ENCODE measurements at regions of chr9 and their contacts with region 1.

Region 1: DNA sequence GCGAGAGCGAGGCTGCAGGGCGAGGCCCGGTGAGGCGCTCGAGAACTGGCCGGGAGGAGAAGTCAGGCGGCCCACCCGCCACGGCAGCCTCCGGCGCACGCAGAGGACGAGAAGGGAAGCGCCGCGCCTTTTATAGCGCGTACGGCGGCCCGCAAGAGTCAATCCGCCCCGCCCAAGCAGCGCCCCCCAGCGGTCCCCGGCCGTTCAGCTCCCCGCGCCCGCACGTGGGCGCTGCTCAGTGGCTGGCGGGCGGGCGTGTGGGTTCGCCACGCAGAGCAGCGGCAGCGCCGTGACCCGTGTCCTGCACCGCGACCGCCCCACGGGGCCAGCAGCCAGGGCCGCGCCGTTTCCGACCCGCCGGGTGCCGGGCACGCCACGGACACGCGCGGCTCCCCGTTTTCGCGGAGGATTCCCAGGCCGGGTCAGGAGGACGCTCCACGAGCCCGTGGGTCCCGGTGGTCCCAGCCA is 14.6 kb downstream of the LCN10 start:
- DNase-seq: peak; percentile 87 to 97 (median 92)
- ATAC-seq: peak; percentile 96
- H3K4me3 ChIP-seq: peak overlapping the region; percentile 87
- H3K4me3 Mint-ChIP-seq: peak overlapping the region in 9 of 10 donors; percentile 47 to 99 (median 95)
- H3K27ac ChIP-seq: peak overlapping the region; percentile 83
- H3K27ac Mint-ChIP-seq: peak overlapping the region in 7 of 9 donors; percentile 47 to 93 (median 92)
- H3K4me1 ChIP-seq: peaks cover 16 to 17% of the 10 kb centered on the region in 2 donors
- H3K4me1 Mint-ChIP-seq: peaks cover 12 to 37% (median 28%) of the 10 kb centered on the region in 7 donors
- H3K27me3 ChIP-seq: no peaks in the 10 kb centered on the region
- H3K27me3 Mint-ChIP-seq: peaks cover 0 to 5% (median 0%) of the 10 kb centered on the region in 5 donors

Region 2: GRCh38 chr9:136539427-136540421 is 188.4 kb before region 1 on chr9:
- CTCF ChIA-PET with region 1: no interaction called
- POLR2A ChIA-PET with region 1: interaction called, 15 read pairs
- intact Hi-C with region 1: no loop called
- DNase-seq: peak; percentile 50 to 92 (median 80)
- ATAC-seq: peak; percentile 79
- H3K4me3 ChIP-seq: peak overlapping the region; percentile 65
- H3K4me3 Mint-ChIP-seq: peak overlapping the region; percentile 78 to 97 (median 85)
- H3K27ac ChIP-seq: peak overlapping the region; percentile 80
- H3K27ac Mint-ChIP-seq: peak overlapping the region; percentile 90 to 99 (median 99)
- H3K4me1 ChIP-seq: peaks cover 61 to 70% of the 10 kb centered on the region in 2 donors
- H3K4me1 Mint-ChIP-seq: peaks cover 24 to 73% (median 48%) of the 10 kb centered on the region in 7 donors
- H3K27me3 ChIP-seq: no peaks in the 10 kb centered on the region
- H3K27me3 Mint-ChIP-seq: no peaks in the 10 kb centered on the region

Region 3: GRCh38 chr9:136671646-136672430 is 56.3 kb before region 1 on chr9:
- CTCF ChIA-PET with region 1: interaction called, 3 read pairs
- POLR2A ChIA-PET with region 1: interaction called, 7 read pairs
- intact Hi-C with region 1: loop called in 1 of 2 experiments (anchors 1 kb)
- DNase-seq: peak in 4 of 9 donors; percentile 31 to 57 (median 42)
- ATAC-seq: peak; percentile 55
- H3K4me3 ChIP-seq: no peak overlapping the region
- H3K4me3 Mint-ChIP-seq: no peak overlapping the region
- H3K27ac ChIP-seq: no peak overlapping the region
- H3K27ac Mint-ChIP-seq: no peak overlapping the region
- H3K4me1 ChIP-seq: no peaks in the 10 kb centered on the region
- H3K4me1 Mint-ChIP-seq: no peaks in the 10 kb centered on the region
- H3K27me3 ChIP-seq: no peaks in the 10 kb centered on the region
- H3K27me3 Mint-ChIP-seq: peaks cover 0 to 4% (median 0%) of the 10 kb centered on the region in 5 donors

Region 4: DNA sequence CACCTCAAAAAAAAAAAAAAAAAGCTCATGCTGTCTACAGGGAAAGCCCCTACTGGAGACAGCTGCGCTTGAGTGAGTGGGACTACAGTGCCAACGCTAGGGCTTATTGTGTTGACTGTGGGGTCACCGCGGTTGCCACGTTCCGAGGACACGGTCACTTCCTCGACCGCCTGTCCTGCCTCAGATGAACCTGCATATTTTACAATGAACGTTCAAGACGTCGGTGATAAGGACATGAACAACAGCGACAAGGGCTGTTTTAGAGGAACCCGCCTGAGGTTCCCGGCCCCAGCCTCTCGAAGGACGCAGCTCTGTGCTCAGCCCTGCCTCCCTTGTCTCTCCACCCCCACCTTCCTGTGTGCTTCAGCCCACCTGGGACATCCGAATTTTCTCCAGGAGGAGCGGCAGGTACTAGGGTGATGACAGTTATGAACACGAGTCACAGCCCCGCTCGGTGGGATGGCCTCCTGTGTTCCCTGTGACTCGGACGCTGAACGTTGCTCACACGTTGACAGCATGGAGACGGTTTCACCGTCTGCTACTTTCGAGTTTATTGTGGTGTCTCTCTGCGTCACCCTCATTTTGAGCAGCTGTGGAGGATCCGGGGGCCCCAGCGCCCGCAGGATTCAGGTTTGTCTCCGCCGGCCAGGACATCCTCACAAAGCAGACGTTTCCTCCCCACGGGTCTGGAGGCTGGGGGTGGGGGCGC is 27.0 kb before region 1 on chr9:
- CTCF ChIA-PET with region 1: no interaction called
- POLR2A ChIA-PET with region 1: interaction called, 19 read pairs
- intact Hi-C with region 1: loop called (anchors 1 to 2 kb)
- DNase-seq: peak; percentile 35 to 68 (median 55)
- ATAC-seq: peak; percentile 83
- H3K4me3 ChIP-seq: peak overlapping the region; percentile 65
- H3K4me3 Mint-ChIP-seq: peak overlapping the region; percentile 76 to 91 (median 84)
- H3K27ac ChIP-seq: peak overlapping the region; percentile 30
- H3K27ac Mint-ChIP-seq: peak overlapping the region; percentile 25 to 93 (median 83)
- H3K4me1 ChIP-seq: peaks cover 7 to 17% of the 10 kb centered on the region in 2 donors
- H3K4me1 Mint-ChIP-seq: peaks cover 10 to 25% (median 14%) of the 10 kb centered on the region in 7 donors
- H3K27me3 ChIP-seq: no peaks in the 10 kb centered on the region
- H3K27me3 Mint-ChIP-seq: peaks cover 0 to 29% (median 5%) of the 10 kb centered on the region in 5 donors

Region 5: GRCh38 chr9:136742591-136743391 is 14.7 kb after region 1 on chr9 and contains the start of gene LCN10:
- CTCF ChIA-PET with region 1: interaction called, 8 read pairs
- POLR2A ChIA-PET with region 1: interaction called, 14 read pairs
- intact Hi-C with region 1: no loop called
- DNase-seq: no peak
- ATAC-seq: no peak
- H3K4me3 ChIP-seq: peak within 1 kb of the TSS; percentile 50
- H3K4me3 Mint-ChIP-seq: peak within 1 kb of the TSS in 8 of 10 donors; percentile 38 to 80 (median 67)
- H3K27ac ChIP-seq: peak within 1 kb of the TSS; percentile 10
- H3K27ac Mint-ChIP-seq: peak within 1 kb of the TSS in 1 of 9 donors; percentile 32
- H3K4me1 ChIP-seq: no peaks in the 10 kb centered on the region
- H3K4me1 Mint-ChIP-seq: peaks cover 0 to 4% (median 0%) of the 10 kb centered on the region in 7 donors
- H3K27me3 ChIP-seq: no peaks in the 10 kb centered on the region
- H3K27me3 Mint-ChIP-seq: peaks cover 0 to 7% (median 0%) of the 10 kb centered on the region in 5 donors
- total RNA-seq, gene LCN10: 0.34 to 3.2 (median 1.2) TPM in 4 of 5 experiments, not detected in the other

Region 6: DNA sequence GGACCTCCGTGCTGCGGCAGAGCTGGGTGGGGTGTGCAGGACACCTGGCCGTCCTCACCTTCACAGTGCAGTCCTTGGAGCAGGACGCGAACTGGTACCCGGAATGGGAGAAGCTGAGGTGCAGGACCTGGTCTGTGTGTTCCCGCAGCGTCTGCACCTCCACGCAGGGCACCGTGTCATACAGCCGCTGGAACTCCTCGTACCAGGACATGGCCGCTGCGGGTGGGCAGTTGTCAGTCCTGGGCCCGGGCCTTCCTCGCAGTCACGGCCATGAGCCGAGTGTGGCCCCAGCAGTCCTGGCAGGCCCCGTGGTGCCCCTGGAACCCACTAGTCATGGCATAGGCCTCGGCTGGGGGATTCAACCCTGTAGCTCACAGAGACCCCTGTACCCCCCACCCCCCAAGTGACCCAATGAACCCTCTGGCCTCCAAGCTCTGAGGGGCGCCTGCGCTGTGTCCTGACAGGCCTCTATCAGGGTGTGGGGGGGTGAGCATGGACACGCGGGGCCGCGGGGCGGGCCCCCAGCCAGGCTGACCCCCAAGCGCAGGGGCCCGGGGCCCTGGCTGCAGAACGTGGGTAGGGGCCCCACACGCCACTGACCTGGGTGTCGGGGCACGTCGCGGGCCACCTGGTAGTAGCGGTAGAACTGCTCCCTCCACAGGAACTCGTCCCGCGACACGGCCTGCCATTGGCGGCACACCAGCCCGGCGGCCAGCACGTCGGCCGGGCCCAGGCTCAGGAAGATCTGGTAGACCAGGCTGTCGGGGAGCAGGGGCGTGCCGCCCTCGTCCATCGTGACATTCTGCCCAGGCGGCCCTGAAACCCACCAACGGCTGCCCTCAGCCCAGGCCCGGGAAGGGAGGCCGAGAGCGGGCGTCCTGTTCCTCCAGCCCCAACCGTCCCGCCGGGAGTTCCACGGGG is 215.4 kb after region 1 on chr9:
- CTCF ChIA-PET with region 1: no interaction called
- POLR2A ChIA-PET with region 1: no interaction called
- intact Hi-C with region 1: no loop called
- DNase-seq: peak in 6 of 9 donors; percentile 20 to 61 (median 30)
- ATAC-seq: peak; percentile 0
- H3K4me3 ChIP-seq: peak overlapping the region; percentile 72
- H3K4me3 Mint-ChIP-seq: peak overlapping the region; percentile 71 to 85 (median 81)
- H3K27ac ChIP-seq: peak overlapping the region; percentile 77
- H3K27ac Mint-ChIP-seq: peak overlapping the region in 7 of 9 donors; percentile 59 to 90 (median 72)
- H3K4me1 ChIP-seq: peaks cover 10 to 11% of the 10 kb centered on the region in 2 donors
- H3K4me1 Mint-ChIP-seq: peaks cover 0 to 16% (median 5%) of the 10 kb centered on the region in 7 donors
- H3K27me3 ChIP-seq: no peaks in the 10 kb centered on the region
- H3K27me3 Mint-ChIP-seq: no peaks in the 10 kb centered on the region

Measured in naive thymus-derived CD4-positive, alpha-beta T cell (primary cell).